Common myeloid progenitor, CD34-positive (primary cell): ENCODE measurements at regions of chr13 and their contacts with region 1.

Region 1: GRCh38 chr13:32581177-32581786 is 5.0 kb upstream of the PDS5B start:
- DNase-seq: peak; percentile 27 to 74 (median 70)
- H3K4me3 ChIP-seq: no peak overlapping the region
- H3K27ac ChIP-seq: no peak overlapping the region
- H3K4me1 ChIP-seq: peaks cover 0 to 7% (median 5%) of the 10 kb centered on the region in 4 experiments
- H3K27me3 ChIP-seq: no peaks in the 10 kb centered on the region

Region 2: GRCh38 chr13:32468502-32469142 is 112.7 kb before region 1 on chr13:
- CTCF ChIA-PET with region 1: interaction called, 11 read pairs
- POLR2A ChIA-PET with region 1: no interaction called
- DNase-seq: no peak
- H3K4me3 ChIP-seq: no peak overlapping the region
- H3K27ac ChIP-seq: no peak overlapping the region
- H3K4me1 ChIP-seq: peaks cover 0 to 15% (median 7%) of the 10 kb centered on the region in 4 experiments
- H3K27me3 ChIP-seq: no peaks in the 10 kb centered on the region

Region 3: GRCh38 chr13:32659736-32660626 is 78.7 kb after region 1 on chr13:
- CTCF ChIA-PET with region 1: interaction called, 10 read pairs
- POLR2A ChIA-PET with region 1: no interaction called
- DNase-seq: no peak
- H3K4me3 ChIP-seq: no peak overlapping the region
- H3K27ac ChIP-seq: no peak overlapping the region
- H3K4me1 ChIP-seq: no peaks in the 10 kb centered on the region
- H3K27me3 ChIP-seq: no peaks in the 10 kb centered on the region